AG04449 (cell line): ENCODE measurements at regions of chr18 and their contacts with region 1.

Region 1: DNA sequence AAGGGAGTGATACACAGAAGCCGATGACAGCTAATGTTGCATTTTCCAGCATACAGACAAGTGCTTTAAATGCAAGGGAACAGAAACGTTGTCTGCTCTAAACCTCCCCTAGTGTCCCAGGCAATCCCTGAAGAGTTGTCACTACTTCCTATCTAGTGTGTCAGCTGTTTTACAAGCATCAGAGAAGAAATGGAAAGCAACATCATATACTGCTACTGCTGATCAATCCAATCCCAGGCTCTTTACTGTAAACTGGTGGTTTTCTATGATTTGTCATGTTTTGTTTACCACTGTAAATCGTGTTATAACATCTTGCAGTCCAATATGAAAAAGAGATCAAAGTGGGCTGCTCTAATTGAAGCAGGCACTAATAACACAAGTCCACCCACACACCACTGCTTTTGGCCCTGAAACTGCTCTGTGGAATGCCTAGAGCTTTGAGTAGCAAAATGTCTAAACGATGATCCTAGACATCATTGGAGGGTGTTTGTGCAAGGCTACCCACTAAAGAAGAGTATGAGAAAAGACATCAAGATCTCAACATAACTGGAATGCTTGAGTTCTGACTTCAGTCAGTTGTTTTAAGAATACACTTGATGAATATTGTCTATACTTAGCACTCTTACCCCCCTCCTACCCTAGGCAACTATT is 18.1 kb upstream of the ROCK1 start:
- DNase-seq: peak; percentile 86
- H3K4me3 ChIP-seq: no peak overlapping the region
- CTCF ChIP-seq: no peak

Region 2: GRCh38 chr18:21111341-21112139 is 18.2 kb before region 1 on chr18 and contains the start of gene ROCK1:
- CTCF ChIA-PET with region 1: interaction called, 11 read pairs
- POLR2A ChIA-PET with region 1: interaction called, 13 read pairs
- DNase-seq: peak; percentile 74
- H3K4me3 ChIP-seq: peak within 1 kb of the TSS; percentile 94
- CTCF ChIP-seq: no peak

Region 3: GRCh38 chr18:21117409-21118131 is 12.1 kb before region 1 on chr18:
- CTCF ChIA-PET with region 1: interaction called, 11 read pairs
- POLR2A ChIA-PET with region 1: interaction called, 13 read pairs
- DNase-seq: peak; percentile 84
- H3K4me3 ChIP-seq: no peak overlapping the region
- CTCF ChIP-seq: no peak

Region 4: DNA sequence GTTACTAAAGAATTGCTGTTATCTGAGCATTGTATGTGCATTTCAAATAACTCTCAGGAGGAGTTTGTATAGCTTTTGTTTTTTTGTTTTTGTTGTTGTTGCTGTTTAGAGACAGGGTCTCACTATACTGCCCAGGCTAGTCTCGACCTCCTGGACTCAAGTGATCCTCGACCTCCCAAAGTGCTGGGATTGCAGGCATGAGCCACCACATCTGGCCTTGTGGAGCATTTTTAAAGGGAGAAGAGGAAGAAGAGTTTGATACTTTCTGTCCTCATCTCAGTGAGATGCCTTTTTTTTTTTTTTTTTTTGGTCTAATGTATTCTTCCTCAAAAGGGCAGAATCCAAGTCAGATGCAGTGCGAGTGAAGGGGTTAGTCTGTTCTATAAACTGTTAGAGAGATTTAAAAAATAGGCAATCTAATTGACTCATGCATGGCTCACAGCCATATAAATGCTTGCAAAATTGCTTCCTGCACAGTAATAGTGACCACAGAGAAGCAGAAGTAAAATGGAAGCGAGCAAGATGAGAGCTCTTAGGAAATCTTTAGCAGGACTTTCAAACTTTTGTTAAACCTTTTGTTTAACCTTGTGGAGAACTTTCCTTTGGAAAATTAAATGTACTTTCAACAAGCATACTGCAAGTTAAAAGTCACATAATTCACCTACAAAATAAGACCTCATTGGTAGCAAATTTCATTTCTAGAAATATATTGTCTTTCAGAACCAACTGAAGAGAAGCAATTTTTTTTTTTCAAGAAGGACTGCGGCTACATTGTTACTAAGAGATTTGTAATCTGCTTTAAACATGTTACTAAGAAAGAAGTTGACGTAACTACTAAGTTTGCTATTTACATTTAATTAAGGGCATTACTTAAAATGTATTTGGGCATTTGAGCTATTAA is 34.2 kb after region 1 on chr18:
- CTCF ChIA-PET with region 1: no interaction called
- POLR2A ChIA-PET with region 1: no interaction called
- DNase-seq: peak; percentile 69
- H3K4me3 ChIP-seq: no peak overlapping the region; the same call in 1 of the 2 replicates
- CTCF ChIP-seq: no peak

Region 5: GRCh38 chr18:21522530-21522929 is 392.8 kb after region 1 on chr18:
- CTCF ChIA-PET with region 1: no interaction called
- POLR2A ChIA-PET with region 1: no interaction called
- DNase-seq: no peak
- H3K4me3 ChIP-seq: no peak overlapping the region
- CTCF ChIP-seq: no peak